ENCODE measurements at regions of chr22 and their contacts with region 1.

Region 1: DNA sequence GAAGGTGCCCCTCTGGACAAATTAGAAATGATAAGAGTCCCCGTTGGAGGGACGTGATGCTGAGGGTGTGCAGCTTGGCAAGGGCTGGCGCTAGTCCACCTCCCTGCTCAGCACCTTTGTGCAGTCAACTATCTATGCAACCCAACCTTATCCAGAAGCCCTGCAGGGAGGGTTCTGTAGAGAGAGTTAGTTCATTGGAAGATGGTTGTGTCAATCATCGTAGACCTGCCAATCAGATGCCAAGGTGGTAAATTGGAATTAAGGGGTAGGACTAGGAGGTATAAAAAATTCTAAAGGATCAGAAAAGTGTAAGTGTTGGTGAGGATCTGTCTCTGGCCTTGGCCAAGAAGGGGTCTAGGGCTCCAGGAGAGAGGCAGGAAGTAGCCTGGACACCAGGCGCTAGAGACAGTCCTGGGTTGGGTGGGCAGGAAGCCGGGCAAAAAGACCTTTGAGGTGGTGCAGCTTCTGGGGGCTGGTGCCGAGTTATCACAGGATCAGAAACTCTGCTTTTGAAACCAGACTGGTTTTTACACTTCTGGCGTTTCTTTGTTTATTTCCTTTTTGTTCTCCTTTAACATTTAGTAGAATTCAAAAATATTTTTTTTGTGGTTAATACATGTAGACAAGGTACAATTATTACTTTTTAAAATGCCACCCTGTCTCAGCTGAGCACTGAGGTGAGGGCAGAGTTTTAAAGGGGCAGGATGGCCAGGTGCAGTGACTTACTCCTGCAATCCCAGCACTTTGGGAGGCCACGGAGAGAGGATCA is 1.6 kb downstream of the C1QTNF6 start:
- DNase-seq: peak; percentile 75

Region 2: DNA sequence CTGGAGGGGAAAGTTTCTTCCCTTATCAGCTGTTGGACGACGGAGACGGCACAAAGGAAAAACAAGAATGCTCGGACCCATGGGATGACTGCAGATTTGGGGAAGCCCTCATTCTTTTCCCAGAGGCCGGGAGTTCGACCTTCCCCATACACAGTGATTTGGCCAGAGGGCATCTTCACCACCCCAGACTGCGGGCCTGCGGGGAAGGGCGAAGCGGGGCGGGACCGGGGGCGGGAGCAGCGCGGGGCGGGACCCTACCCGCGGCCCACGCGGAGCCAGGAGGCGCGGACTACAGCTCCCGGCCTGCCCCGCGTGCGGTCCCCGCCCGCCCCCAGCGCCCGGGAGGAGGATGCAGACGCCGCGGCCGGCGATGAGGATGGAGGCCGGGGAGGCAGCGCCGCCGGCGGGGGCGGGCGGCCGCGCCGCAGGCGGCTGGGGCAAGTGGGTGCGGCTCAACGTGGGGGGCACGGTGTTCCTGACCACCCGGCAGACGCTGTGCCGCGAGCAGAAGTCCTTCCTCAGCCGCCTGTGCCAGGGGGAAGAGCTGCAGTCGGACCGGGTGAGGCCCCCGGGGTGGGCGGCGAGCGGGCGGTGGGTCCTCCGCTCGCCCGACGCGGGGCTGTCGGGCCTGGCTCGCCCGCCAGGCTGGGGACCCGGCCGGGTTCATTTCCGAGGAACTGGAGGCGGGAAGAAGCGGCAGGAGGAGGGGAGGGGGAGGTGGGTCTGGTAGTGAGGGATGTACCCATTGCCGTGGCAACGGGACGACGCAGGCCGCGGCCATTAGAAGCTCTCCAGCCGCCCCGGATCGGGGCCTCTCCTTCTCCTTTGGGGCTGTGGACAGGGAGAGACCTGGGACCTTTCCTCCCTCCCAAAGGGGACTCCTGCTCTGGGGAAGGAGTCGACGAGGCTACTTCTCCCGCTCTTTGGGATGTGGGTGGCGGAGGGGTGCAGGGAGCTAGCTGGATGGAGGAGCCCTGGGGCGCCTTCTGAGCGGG is 134.7 kb before region 1 on chr22 and contains the start of gene KCTD17:
- in situ Hi-C with region 1: loop called (anchors 10 kb)
- DNase-seq: peak; percentile 52
- total RNA-seq, gene KCTD17: 29.0 and 38.0 TPM in 2 replicates

Region 3: GRCh38 chr22:37328017-37328416 is 141.6 kb after region 1 on chr22:
- in situ Hi-C with region 1: loop called (anchors 10 kb)
- DNase-seq: peak; percentile 67